Transverse colon (tissue), 4 donors: ENCODE measurements at regions of chr10 and their contacts with region 1.

Region 1: GRCh38 chr10:125048101-125048864 is 106.4 kb downstream of the ZRANB1 start:
- DNase-seq: peak; percentile 89
- H3K4me3 ChIP-seq: no peak overlapping the region
- H3K27ac ChIP-seq: peak overlapping the region; percentile 61 to 85 (median 80)
- H3K4me1 ChIP-seq: peaks cover 22 to 37% (median 28%) of the 10 kb centered on the region in 4 donors
- H3K27me3 ChIP-seq: no peaks in the 10 kb centered on the region
- CTCF ChIP-seq: peak; percentile 92 to 97 (median 96)
- EP300 ChIP-seq: no peak
- POLR2A ChIP-seq: no peak

Region 2: DNA sequence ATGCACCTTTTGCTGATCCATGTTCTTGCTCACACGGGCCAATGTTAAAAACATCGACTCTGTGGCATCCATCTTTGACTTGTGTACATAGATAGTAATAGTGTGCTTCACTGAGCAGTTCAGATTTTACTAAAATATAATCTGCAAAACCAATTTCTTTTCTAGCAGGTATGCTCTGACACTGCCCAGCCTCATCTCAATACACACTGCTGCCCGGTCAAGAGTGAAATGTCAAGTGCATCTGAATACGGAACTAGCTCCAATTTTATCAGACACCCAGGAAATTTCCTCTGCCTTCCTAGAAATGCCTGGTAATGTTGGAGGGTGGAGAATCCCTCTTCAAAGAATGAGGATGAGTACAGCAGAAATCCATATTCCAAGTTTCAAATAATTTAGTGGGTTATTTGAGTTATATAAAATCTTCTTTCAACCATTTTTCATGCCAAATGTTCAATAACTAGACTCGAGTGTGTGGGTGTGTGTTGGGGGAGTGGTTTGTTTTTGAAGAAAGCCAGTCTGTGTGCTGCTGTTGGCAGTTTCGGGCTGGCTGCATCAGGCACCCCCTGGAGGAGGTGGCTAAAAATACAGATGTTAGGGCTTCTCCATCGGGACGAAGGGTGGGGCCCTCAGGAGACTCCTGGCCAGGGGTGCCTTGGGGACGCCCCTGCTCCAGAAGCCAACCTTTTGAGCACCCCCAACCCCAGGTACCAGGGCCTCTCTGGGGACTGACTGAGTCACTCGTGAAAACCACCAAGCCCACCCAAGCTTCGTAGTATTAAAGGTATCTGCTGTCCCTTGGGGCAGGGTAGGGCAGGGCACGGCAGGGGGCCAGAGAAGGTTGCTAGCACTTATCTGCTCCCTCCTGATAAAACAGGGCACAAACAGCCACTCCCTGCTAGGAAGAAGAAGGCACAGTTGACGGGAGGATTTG is 96.7 kb after region 1 on chr10:
- in situ Hi-C with region 1: loop called in 1 of 4 experiments (anchors 25 kb)
- intact Hi-C with region 1: loop called (anchors 10 kb)
- DNase-seq: no peak
- H3K4me3 ChIP-seq: no peak overlapping the region
- H3K27ac ChIP-seq: peak overlapping the region in 3 of 4 donors; percentile 98 to 99 (median 99)
- H3K4me1 ChIP-seq: peaks cover 42 to 78% (median 57%) of the 10 kb centered on the region in 4 donors
- H3K27me3 ChIP-seq: no peaks in the 10 kb centered on the region
- CTCF ChIP-seq: peak in 4 of 5 experiments; percentile 23 to 32 (median 28)
- EP300 ChIP-seq: no peak
- POLR2A ChIP-seq: no peak

Region 3: DNA sequence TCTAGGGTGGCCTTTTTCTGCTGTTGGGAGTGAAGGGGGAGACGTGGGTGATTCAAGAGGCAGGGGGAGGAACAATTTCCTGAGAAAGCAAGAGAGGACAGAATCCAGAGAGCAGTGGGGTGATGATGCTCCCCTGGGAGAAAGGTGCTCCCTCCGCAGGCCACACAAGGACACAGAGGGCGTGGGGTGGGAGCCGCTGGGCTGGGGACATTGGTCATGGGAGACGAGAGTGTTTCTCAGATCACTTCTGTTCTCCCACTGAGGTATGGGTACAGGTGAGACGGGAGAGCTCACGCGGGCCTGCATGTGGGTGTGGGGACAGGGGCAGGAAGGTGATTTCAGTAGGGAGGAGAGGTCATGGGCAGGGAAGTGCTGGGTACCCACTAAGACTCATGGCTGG is 371.5 kb after region 1 on chr10:
- in situ Hi-C with region 1: no loop called
- intact Hi-C with region 1: no loop called
- DNase-seq: no peak
- H3K4me3 ChIP-seq: no peak overlapping the region
- H3K27ac ChIP-seq: no peak overlapping the region
- H3K4me1 ChIP-seq: peaks cover 0 to 5% (median 0%) of the 10 kb centered on the region in 4 donors
- H3K27me3 ChIP-seq: no peaks in the 10 kb centered on the region
- CTCF ChIP-seq: no peak
- EP300 ChIP-seq: no peak
- POLR2A ChIP-seq: no peak

Region 4: DNA sequence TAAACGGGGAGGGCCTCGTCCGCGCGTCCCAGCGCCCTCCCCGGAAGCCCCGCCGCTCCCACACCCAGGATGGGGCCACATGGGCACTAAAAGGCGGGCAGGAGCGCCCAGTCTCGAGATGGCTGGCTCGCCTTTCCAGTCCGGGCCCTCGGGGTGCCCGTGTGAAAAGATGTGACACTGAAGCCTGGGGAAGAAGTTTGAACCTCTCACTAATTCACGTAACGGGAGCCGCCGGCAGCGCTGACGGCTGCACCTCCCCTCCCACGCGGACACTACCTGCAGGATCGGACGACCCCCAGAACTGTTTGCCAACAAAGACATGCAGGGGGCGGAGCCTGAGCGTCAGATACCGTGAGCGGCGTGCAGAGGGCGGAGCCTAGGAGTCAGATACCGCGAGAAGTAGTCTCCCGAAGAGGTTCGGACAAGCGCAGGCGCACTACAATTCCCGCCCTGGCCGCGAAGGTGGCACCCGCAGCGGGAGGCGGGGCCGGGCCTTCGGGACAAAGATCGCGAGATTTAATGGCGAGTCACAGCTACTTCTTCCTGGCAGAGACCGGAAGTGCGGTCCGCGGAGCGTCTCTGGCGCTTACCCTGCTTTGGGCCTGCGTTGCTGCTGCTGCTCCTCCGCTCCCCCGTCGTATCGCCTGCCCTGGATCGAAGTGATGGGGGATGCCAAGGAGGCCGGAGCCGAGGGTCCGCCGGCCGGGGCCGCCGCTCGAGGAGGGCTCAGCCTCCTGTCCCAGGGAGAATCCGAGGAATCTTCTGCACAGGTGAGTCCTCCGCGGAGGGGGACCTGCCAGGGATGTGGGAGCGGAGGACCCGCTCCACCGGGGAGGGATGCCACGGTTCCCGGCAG is 671.1 kb after region 1 on chr10 and contains the start of gene EDRF1:
- in situ Hi-C with region 1: loop called in 1 of 4 experiments (anchors 25 kb)
- intact Hi-C with region 1: no loop called
- DNase-seq: peak; percentile 99
- H3K4me3 ChIP-seq: peak within 1 kb of the TSS; percentile 68 to 93 (median 78)
- H3K27ac ChIP-seq: peak within 1 kb of the TSS; percentile 89 to 93 (median 90)
- H3K4me1 ChIP-seq: peaks cover 4 to 25% (median 11%) of the 10 kb centered on the region in 4 donors
- H3K27me3 ChIP-seq: no peaks in the 10 kb centered on the region
- CTCF ChIP-seq: no peak
- EP300 ChIP-seq: no peak
- POLR2A ChIP-seq: peak; percentile 89
- total RNA-seq, gene EDRF1: 20.2 to 35.1 (median 26.3) TPM